Activated naive CD4-positive, alpha-beta T cell treated with anti-CD3 and anti-CD28 coated beads for 36 hours (primary cell): ENCODE measurements at regions of chrX and their contacts with region 1.

Region 1: DNA sequence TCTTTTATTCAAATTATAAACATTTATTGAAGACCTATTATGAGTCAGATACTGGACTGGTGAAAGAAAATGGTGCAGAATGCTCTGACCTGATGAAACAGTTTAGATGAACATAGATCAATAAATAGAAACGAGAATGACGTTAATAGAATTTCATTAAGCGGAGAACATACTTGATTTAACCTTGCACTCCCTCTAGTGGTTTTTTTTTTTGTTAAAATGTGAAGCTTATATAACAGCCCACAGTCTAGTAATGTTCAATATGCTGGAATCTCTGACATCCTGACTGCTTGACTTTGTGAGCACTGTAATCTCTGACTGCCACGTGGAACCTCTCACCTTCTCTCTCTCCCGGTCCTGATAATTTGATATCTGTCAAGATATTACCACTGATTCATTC is 32.3 kb downstream of the HDAC8 start:
- DNase-seq: no peak
- H3K4me3 Mint-ChIP-seq: no peak overlapping the region
- H3K27ac Mint-ChIP-seq: no peak overlapping the region
- H3K4me1 Mint-ChIP-seq: peaks cover 5% of the 10 kb centered on the region
- H3K27me3 Mint-ChIP-seq: no peaks in the 10 kb centered on the region

Region 2: GRCh38 chrX:72297953-72298730 is 242.2 kb before region 1 on chrX:
- CTCF ChIA-PET with region 1: interaction called, 4 read pairs
- intact Hi-C with region 1: loop called (anchors 5 kb)
- DNase-seq: no peak
- H3K4me3 Mint-ChIP-seq: no peak overlapping the region
- H3K27ac Mint-ChIP-seq: no peak overlapping the region
- H3K4me1 Mint-ChIP-seq: no peaks in the 10 kb centered on the region
- H3K27me3 Mint-ChIP-seq: peaks cover 29% of the 10 kb centered on the region

Region 3: DNA sequence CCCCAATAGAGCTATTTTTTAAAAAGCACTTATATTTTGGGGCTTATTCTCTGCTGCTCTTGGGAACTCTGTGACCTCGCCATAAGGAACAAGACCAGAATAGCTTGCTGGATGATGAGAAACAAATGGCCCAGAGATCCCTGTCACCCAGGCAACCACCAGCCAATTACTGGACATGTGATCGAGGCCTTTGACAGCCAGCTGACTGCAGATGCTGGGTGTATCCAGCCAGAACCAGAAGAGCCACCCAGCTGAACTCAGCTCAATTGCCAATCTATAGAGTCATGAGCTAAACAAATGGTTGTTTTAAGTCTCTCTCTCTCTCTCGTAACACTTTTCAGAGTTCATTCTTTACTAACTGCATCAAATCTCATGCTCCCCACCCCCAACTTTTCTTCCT is 210.2 kb before region 1 on chrX:
- CTCF ChIA-PET with region 1: no interaction called
- intact Hi-C with region 1: no loop called
- DNase-seq: no peak
- H3K4me3 Mint-ChIP-seq: no peak overlapping the region
- H3K27ac Mint-ChIP-seq: no peak overlapping the region
- H3K4me1 Mint-ChIP-seq: no peaks in the 10 kb centered on the region
- H3K27me3 Mint-ChIP-seq: no peaks in the 10 kb centered on the region